B cell (primary cell): ENCODE measurements at regions of chr5 and their contacts with region 1.

Region 1: GRCh38 chr5:62354028-62354874 is 48.2 kb downstream of the KIF2A start:
- DNase-seq: peak; percentile 66
- ATAC-seq: peak; percentile 62
- H3K4me3 ChIP-seq: no peak overlapping the region
- H3K4me3 Mint-ChIP-seq: no peak overlapping the region
- H3K27ac ChIP-seq: no peak overlapping the region
- H3K27ac Mint-ChIP-seq: no peak overlapping the region
- H3K4me1 ChIP-seq: no peaks in the 10 kb centered on the region
- H3K4me1 Mint-ChIP-seq: no peaks in the 10 kb centered on the region
- H3K27me3 ChIP-seq: no peaks in the 10 kb centered on the region
- H3K27me3 Mint-ChIP-seq: no peaks in the 10 kb centered on the region
- CTCF ChIP-seq: peak; percentile 84

Region 2: DNA sequence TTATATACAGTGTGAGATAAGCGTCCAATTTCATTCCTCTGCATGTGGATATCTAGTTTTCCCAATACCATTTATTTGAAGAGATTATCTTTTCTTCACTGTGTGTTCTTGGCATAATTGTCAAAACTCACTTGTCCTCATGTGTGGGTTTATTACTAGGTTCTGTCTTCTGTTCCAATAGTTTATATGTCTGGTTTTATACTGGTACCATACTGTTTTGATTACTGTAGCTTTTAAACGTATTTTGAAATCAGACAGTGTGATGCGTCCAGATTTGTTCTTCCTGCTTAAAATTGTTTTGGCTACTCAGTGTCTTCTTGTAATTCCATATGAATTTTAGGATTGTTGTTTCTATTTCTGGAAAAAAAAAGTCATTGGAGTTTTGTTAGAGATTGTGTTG is 1399.0 kb before region 1 on chr5:
- CTCF ChIA-PET with region 1: no interaction called
- POLR2A ChIA-PET with region 1: no interaction called
- intact Hi-C with region 1: loop called (anchors 2 kb)
- DNase-seq: no peak
- ATAC-seq: no peak
- H3K4me3 ChIP-seq: no peak overlapping the region
- H3K4me3 Mint-ChIP-seq: no peak overlapping the region
- H3K27ac ChIP-seq: no peak overlapping the region
- H3K27ac Mint-ChIP-seq: no peak overlapping the region
- H3K4me1 ChIP-seq: no peaks in the 10 kb centered on the region
- H3K4me1 Mint-ChIP-seq: peaks cover 9% of the 10 kb centered on the region
- H3K27me3 ChIP-seq: no peaks in the 10 kb centered on the region
- H3K27me3 Mint-ChIP-seq: no peaks in the 10 kb centered on the region
- CTCF ChIP-seq: no peak

Region 3: GRCh38 chr5:61379677-61380076 is 974.6 kb before region 1 on chr5:
- CTCF ChIA-PET with region 1: no interaction called
- POLR2A ChIA-PET with region 1: no interaction called
- intact Hi-C with region 1: no loop called
- DNase-seq: no peak
- ATAC-seq: no peak
- H3K4me3 ChIP-seq: no peak overlapping the region
- H3K4me3 Mint-ChIP-seq: no peak overlapping the region
- H3K27ac ChIP-seq: no peak overlapping the region
- H3K27ac Mint-ChIP-seq: no peak overlapping the region
- H3K4me1 ChIP-seq: no peaks in the 10 kb centered on the region
- H3K4me1 Mint-ChIP-seq: peaks cover 3% of the 10 kb centered on the region
- H3K27me3 ChIP-seq: no peaks in the 10 kb centered on the region
- H3K27me3 Mint-ChIP-seq: no peaks in the 10 kb centered on the region
- CTCF ChIP-seq: no peak

Region 4: DNA sequence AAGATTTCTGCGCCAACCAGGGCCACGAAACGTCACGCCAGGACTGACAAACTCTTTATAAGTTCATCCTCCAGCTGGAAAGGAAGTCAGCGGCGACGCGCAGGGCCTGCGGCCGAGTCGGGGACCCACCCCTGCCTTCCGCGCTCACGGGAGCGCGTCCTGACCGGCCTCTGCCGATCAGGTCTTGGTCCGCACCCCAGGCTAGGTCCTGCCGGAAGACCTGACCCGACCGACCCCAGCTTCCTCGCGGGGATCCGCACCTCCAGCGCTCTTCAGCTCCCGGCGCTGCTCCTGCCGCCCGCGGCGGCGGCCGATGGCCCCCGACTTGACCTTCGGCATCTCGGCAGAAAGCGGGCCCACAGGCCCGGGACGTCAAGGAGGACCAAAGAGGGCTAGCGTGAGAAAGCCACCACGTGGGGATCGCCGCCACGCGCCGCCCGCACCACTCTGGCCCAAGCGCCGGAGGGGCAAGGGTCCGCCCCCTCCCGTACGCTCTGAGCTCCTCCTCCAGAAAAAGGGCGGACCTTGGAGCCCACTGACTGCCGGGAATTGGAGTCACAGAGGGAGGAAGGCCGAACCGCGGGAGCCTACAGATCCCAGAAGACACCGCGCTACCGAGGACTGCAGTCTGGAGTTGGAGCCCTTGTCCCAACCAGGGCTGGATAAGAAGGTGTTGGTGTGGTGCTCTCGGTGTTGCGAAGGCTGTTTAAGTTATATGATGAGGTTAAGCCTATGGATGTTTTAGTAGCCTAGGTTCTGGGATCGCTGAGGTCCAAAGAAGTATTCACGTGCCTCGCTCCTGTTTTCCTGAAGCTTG is 49.4 kb after region 1 on chr5 and contains the start of gene DIMT1:
- CTCF ChIA-PET with region 1: interaction called, 4 read pairs
- POLR2A ChIA-PET with region 1: no interaction called
- intact Hi-C with region 1: loop called (anchors 5 kb)
- DNase-seq: peak; percentile 93
- ATAC-seq: peak; percentile 99
- H3K4me3 ChIP-seq: peak within 1 kb of the TSS; percentile 92 to 98 (median 97)
- H3K4me3 Mint-ChIP-seq: peak within 1 kb of the TSS; percentile 100
- H3K27ac ChIP-seq: peak within 1 kb of the TSS; percentile 93 to 95
- H3K27ac Mint-ChIP-seq: peak within 1 kb of the TSS; percentile 87
- H3K4me1 ChIP-seq: peaks cover 5 to 16% of the 10 kb centered on the region in 2 donors
- H3K4me1 Mint-ChIP-seq: peaks cover 22% of the 10 kb centered on the region
- H3K27me3 ChIP-seq: no peaks in the 10 kb centered on the region
- H3K27me3 Mint-ChIP-seq: no peaks in the 10 kb centered on the region
- CTCF ChIP-seq: no peak
- total RNA-seq, gene DIMT1: 19.5 and 20.7 TPM in 2 replicates

Region 5: DNA sequence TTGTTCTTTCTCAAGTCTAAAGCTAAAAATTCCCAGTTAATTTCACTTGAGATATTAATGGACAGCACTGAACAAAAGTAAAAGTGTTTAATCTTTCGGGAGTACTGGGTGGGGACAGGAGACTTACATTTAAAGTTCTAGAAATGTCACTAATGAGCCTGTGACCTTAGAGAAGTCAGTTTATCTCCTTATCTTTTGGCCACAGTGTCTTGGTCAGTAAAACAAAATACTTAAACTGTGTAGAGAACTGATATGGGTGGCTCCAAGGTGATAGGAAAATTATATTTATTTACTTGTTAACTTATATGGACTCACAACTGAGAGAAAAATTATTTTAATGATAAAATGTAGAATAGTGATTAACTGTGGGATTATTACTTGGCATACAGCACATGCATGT is 67.2 kb after region 1 on chr5:
- CTCF ChIA-PET with region 1: no interaction called
- POLR2A ChIA-PET with region 1: no interaction called
- intact Hi-C with region 1: no loop called
- DNase-seq: no peak
- ATAC-seq: no peak
- H3K4me3 ChIP-seq: no peak overlapping the region
- H3K4me3 Mint-ChIP-seq: no peak overlapping the region
- H3K27ac ChIP-seq: no peak overlapping the region
- H3K27ac Mint-ChIP-seq: no peak overlapping the region
- H3K4me1 ChIP-seq: no peaks in the 10 kb centered on the region
- H3K4me1 Mint-ChIP-seq: peaks cover 3% of the 10 kb centered on the region
- H3K27me3 ChIP-seq: no peaks in the 10 kb centered on the region
- H3K27me3 Mint-ChIP-seq: no peaks in the 10 kb centered on the region
- CTCF ChIP-seq: no peak